HepG2 (cell line): ENCODE measurements at regions of chr11 and their contacts with region 1.

Region 1: DNA sequence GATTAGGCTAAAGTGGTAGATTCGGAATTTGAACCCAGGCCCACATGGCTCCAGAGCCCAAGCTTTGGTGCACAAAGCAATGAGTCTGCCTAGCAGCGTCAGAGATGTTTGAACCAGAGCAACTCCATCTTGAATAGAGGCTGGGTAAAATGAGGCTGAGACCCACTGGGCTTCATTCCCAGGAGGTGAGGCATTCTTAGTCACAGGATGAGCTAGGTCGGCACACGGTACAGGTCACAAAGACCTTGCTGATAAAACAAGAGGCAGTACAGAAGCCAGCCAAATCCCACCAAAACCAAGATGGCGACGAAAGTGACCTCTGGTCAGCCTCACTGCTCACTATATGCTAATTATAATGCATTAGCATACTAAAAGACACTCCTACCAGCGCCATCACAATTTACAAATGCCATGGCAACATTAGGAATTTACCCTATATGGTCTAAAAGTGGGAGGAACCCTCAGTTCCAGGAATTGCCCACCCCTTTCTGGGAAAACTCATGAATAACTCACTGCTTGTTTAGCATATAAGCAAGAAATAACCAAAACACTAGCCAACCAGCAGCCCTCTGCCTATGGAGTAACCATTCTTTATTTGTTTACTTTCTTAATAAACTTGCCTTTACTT is 40.3 kb upstream of the DAGLA start:
- DNase-seq: no peak
- ATAC-seq: no peak
- H3K4me3 ChIP-seq: no peak overlapping the region
- H3K27ac ChIP-seq: no peak overlapping the region
- H3K4me1 ChIP-seq: no peaks in the 10 kb centered on the region
- H3K27me3 ChIP-seq: peaks cover 0 to 10% of the 10 kb centered on the region in 2 experiments; a peak in 2 of 5 replicates
- CTCF ChIP-seq: no peak
- EP300 ChIP-seq: no peak
- POLR2A ChIP-seq: no peak
- RAD21 ChIP-seq: no peak

Region 2: DNA sequence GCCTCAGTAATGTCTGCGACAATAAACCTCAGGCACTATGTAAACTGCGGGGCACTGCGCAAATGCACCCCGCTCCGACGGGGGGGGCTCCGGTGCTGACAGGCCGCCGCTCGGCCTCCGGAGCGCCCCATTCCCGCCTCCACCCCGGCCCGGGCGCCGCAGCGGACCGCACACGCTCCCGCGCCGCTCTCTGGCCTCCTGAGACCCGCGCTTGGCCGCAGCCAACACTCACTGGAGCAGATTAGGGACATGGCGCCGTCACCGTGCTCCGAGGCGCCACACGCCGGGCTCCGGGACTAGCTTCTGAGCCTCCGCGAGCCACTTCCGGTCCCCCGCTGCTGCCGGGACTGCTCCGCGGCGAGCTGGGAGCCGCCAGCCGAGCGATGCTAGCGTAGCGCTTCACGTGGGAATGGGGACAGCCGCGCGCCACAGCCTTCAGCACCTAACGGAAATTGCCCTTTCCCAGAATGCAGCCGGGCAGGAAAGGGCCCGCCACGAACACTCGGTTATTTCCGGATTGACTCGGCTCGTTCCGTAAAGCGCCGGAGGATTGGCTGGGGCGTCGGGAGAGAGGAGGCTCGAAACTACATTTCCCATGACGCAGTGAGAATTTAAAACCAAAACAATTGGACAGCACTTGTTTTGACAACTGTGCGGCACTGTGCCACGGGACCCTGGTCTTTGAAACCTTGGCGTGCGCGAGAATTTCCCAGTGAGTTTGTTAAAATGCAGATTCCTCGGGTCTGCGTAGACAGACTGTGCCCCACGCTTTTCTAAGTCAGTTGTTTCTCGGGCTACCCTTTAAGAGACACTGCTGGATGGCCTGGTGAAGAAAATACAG is 733.6 kb before region 1 on chr11 and contains the start of gene PRPF19:
- CTCF ChIA-PET with region 1: no interaction called
- POLR2A ChIA-PET with region 1: no interaction called
- in situ Hi-C with region 1: no loop called
- intact Hi-C with region 1: no loop called
- DNase-seq: peak; percentile 96
- ATAC-seq: peak; percentile 95
- H3K4me3 ChIP-seq: peak within 1 kb of the TSS; percentile 70 to 88 (median 83)
- H3K27ac ChIP-seq: peak within 1 kb of the TSS; percentile 94
- H3K4me1 ChIP-seq: peaks cover 34% of the 10 kb centered on the region
- H3K27me3 ChIP-seq: no peaks in the 10 kb centered on the region
- CTCF ChIP-seq: peak; percentile 12; the same call in 1 of the 2 replicates
- EP300 ChIP-seq: no peak
- POLR2A ChIP-seq: peak; percentile 88 to 89
- RAD21 ChIP-seq: peak; percentile 45; the same call in 1 of the 2 replicates
- total RNA-seq, gene PRPF19: 91.1 and 115 TPM in 2 replicates

Region 3: GRCh38 chr11:61446211-61446651 is 193.7 kb before region 1 on chr11:
- CTCF ChIA-PET with region 1: interaction called, 6 read pairs
- POLR2A ChIA-PET with region 1: no interaction called
- in situ Hi-C with region 1: no loop called
- intact Hi-C with region 1: loop called (anchors 1 kb)
- DNase-seq: peak; percentile 78
- ATAC-seq: peak; percentile 97
- H3K4me3 ChIP-seq: no peak overlapping the region
- H3K27ac ChIP-seq: no peak overlapping the region
- H3K4me1 ChIP-seq: peaks cover 9% of the 10 kb centered on the region; the same call in 1 of the 2 replicates
- H3K27me3 ChIP-seq: no peaks in the 10 kb centered on the region
- CTCF ChIP-seq: peak; percentile 95
- EP300 ChIP-seq: no peak
- POLR2A ChIP-seq: no peak
- RAD21 ChIP-seq: peak; percentile 78

Region 4: DNA sequence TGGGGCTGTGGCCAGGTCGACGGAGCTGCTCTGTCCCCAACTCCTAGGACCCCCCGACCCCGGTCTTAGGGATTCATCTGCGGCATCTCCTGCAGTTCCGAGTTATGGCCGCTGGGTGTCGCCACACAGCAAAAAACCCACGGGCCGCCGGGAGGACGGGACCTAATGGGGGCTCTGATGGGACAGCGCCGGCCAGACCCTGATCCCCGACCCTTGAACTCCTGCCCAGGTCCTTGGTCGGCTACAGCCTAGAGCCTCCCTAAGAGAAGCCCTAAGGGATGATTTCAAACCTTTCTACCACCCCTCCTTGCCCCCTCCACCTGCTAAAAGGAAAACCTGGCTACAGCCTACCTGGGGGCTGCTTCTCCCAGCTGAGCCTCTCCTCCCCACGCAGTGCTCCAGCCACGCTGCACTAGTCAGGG is 162.2 kb before region 1 on chr11:
- CTCF ChIA-PET with region 1: interaction called, 7 read pairs
- POLR2A ChIA-PET with region 1: no interaction called
- in situ Hi-C with region 1: loop called (anchors 5 kb)
- intact Hi-C with region 1: loop called (anchors 2 kb)
- DNase-seq: no peak
- ATAC-seq: peak; percentile 41
- H3K4me3 ChIP-seq: no peak overlapping the region
- H3K27ac ChIP-seq: no peak overlapping the region
- H3K4me1 ChIP-seq: peaks cover 27% of the 10 kb centered on the region
- H3K27me3 ChIP-seq: peaks cover 2 to 22% of the 10 kb centered on the region in 2 experiments; a peak in 4 of 5 replicates
- CTCF ChIP-seq: peak; percentile 94
- EP300 ChIP-seq: no peak
- POLR2A ChIP-seq: no peak
- RAD21 ChIP-seq: peak; percentile 94

Region 5: DNA sequence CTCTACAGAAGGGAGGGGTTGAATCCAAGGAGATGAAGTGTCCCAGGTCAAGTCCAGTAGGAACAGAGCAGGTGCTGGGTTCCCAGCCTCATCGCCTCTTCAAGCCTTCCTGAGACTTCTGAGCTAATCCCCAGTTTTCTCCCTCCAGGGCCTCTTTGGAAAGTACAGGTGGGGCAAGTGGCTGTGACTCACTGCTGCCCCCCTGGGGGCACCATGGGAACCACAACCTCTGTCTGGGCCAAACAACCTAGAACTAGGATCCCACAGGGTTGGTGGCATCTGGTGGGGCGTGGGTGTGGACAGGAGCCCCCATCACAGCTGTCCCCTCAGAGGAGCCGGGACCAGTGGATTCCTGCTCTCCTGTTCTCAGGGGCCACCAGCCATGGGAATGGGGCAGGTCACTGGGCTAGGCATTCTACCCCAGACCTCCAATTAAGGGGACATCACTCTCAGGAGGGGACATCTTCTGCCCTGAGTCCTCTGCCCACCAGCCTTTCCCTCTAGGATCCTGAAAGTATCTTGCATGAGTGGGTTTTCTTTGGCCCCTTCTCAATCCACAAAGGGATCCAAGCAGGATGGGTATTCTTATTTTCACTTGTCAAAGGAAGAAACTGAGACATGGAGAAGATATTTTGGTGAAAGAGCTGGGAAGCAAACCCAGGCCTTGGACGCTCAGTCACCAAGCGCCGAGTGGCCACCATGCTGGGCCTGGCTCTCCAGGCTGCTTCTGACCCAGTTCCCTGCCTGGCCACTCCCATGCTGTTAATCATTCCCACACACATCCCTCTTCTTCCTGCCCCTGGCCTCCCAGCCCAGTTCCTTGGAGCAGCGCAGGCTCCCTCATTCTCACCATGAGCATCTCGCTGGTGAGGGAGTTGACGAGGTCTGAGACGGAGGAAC is 107.5 kb before region 1 on chr11:
- CTCF ChIA-PET with region 1: interaction called, 5 read pairs
- POLR2A ChIA-PET with region 1: no interaction called
- in situ Hi-C with region 1: loop called (anchors 5 kb)
- intact Hi-C with region 1: no loop called
- DNase-seq: peak; percentile 34
- ATAC-seq: peak; percentile 48
- H3K4me3 ChIP-seq: no peak overlapping the region
- H3K27ac ChIP-seq: no peak overlapping the region
- H3K4me1 ChIP-seq: peaks cover 42% of the 10 kb centered on the region
- H3K27me3 ChIP-seq: peaks cover 0 to 6% of the 10 kb centered on the region in 2 experiments; a peak in 1 of 5 replicates
- CTCF ChIP-seq: peak; percentile 71
- EP300 ChIP-seq: no peak
- POLR2A ChIP-seq: no peak
- RAD21 ChIP-seq: peak; percentile 46; the same call in 1 of the 2 replicates

Region 6: GRCh38 chr11:61581030-61581928 is 58.7 kb before region 1 on chr11 and contains the start of gene SYT7:
- CTCF ChIA-PET with region 1: no interaction called
- POLR2A ChIA-PET with region 1: no interaction called
- in situ Hi-C with region 1: no loop called
- intact Hi-C with region 1: loop called (anchors 2 kb)
- DNase-seq: peak; percentile 87
- ATAC-seq: peak; percentile 60
- H3K4me3 ChIP-seq: peak within 1 kb of the TSS; percentile 43 to 75 (median 52)
- H3K27ac ChIP-seq: no peak within 1 kb of the TSS
- H3K4me1 ChIP-seq: peaks cover 45% of the 10 kb centered on the region
- H3K27me3 ChIP-seq: peaks cover 5 to 43% of the 10 kb centered on the region in 2 experiments; a peak in 3 of 5 replicates
- CTCF ChIP-seq: peak; percentile 53
- EP300 ChIP-seq: no peak
- POLR2A ChIP-seq: no peak
- RAD21 ChIP-seq: peak; percentile 57
- total RNA-seq, gene SYT7: 0.81 and 1.4 TPM in 2 replicates

Region 7: GRCh38 chr11:61769169-61769920 is 129.4 kb after region 1 on chr11:
- CTCF ChIA-PET with region 1: no interaction called
- POLR2A ChIA-PET with region 1: no interaction called
- in situ Hi-C with region 1: no loop called
- intact Hi-C with region 1: no loop called
- DNase-seq: peak; percentile 90
- ATAC-seq: peak; percentile 90
- H3K4me3 ChIP-seq: peak overlapping the region; percentile 46 to 66 (median 56); a peak in 5 of 6 replicates
- H3K27ac ChIP-seq: peak overlapping the region; percentile 91
- H3K4me1 ChIP-seq: peaks cover 81% of the 10 kb centered on the region
- H3K27me3 ChIP-seq: no peaks in the 10 kb centered on the region; a peak in 1 of 5 replicates
- CTCF ChIP-seq: peak; percentile 85
- EP300 ChIP-seq: peak; percentile 58 to 83; a peak in 3 of 4 replicates
- POLR2A ChIP-seq: peak in 1 of 2 experiments; percentile 30; a peak in 1 of 4 replicates
- RAD21 ChIP-seq: peak; percentile 91